CD14-positive monocyte (primary cell): ENCODE measurements at regions of chr1 and their contacts with region 1.

Region 1: DNA sequence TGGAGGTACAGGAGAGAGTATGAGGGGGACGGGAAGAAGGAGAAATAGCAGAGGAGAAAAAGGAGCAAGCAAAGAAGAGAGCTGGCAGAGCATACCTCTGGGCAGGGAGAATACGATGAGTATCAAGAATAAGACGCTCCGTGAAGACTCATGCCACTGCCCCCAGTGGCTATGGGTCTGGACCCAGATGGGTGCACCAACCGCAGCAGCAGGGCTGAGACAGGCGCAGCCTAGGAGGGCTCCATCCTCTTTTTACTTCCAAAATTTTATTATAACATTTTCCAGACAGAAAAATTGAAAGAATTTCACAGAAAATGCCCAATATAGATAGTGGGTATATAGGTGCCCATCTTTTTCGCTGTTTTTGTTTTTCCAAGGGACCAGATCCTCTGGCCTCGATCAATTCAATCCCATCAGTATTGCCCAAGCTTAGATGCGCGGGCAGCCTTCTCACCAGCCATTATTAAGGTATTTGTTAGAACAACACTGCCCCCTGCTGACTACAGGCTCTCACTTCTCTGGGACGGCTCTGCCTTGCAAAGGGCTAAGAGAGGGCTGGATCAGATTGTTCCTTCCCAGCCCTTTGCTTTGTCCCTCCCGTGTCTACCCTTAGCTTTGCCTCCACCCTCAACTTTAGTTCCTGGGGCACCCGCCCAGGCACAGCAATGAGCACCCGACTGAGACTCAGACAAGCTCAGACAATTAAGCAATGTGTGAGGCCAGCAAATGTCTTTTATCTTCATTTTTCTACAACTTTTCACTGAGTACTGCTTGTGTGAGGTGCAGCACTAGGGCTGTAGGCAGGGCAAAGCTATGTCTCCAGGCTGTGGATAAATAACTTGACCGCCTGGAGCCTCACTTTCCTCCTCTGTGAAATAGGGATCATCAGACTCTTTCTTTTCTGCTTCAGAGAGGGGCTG is 17.5 kb upstream of the CAMK1G start:
- DNase-seq: peak; percentile 55 to 74 (median 74)
- H3K4me3 ChIP-seq: no peak overlapping the region
- H3K4me3 Mint-ChIP-seq: no peak overlapping the region
- H3K27ac ChIP-seq: no peak overlapping the region
- H3K27ac Mint-ChIP-seq: no peak overlapping the region
- H3K4me1 ChIP-seq: peaks cover 0 to 4% of the 10 kb centered on the region in 2 donors
- H3K4me1 Mint-ChIP-seq: peaks cover 8% of the 10 kb centered on the region
- H3K27me3 ChIP-seq: peaks cover 0 to 3% of the 10 kb centered on the region in 2 donors
- H3K27me3 Mint-ChIP-seq: peaks cover 10 to 17% (median 15%) of the 10 kb centered on the region in 3 donors
- CTCF ChIP-seq: peak; percentile 88

Region 2: GRCh38 chr1:208652296-208653160 is 913.5 kb before region 1 on chr1:
- intact Hi-C with region 1: loop called in 1 of 2 experiments (anchors 5 kb)
- DNase-seq: peak in 2 of 3 donors; percentile 16 to 20
- H3K4me3 ChIP-seq: no peak overlapping the region
- H3K4me3 Mint-ChIP-seq: no peak overlapping the region
- H3K27ac ChIP-seq: no peak overlapping the region
- H3K27ac Mint-ChIP-seq: no peak overlapping the region
- H3K4me1 ChIP-seq: no peaks in the 10 kb centered on the region
- H3K4me1 Mint-ChIP-seq: no peaks in the 10 kb centered on the region
- H3K27me3 ChIP-seq: no peaks in the 10 kb centered on the region
- H3K27me3 Mint-ChIP-seq: peaks cover 3 to 4% (median 4%) of the 10 kb centered on the region in 3 donors
- CTCF ChIP-seq: peak; percentile 81